SK-N-SH (cell line): ENCODE measurements at regions of chr7 and their contacts with region 1.

Region 1: DNA sequence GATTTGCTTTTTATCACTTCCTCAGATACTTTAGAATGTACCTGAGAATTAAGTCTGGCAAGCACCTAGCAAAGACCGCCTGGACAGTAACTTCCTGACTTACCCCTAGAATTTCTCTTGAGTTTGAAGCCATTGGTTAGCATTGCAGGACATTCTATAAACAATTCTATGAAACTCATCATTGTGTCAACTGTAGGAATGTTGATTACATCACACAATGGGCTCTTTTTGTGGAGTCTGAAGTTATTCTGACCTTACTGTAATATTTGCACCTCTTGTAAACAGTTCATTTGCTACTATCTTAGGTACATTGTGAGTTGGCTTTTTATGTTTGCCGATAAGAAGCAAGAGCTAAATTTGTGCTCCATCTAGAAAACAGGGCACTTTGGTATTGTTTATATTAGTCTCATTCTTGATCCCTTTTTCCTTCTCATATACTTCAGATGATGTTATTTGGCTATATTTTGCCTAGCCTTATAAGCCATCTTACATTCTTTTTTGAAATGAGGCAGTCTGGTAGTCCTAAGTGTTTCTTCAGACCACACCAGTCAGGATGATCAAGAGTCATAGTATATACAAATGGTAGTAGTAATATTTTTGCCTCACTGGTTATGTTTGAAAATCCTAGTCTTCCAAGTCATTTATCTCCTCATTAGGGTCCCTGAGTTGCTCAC is 52.4 kb downstream of the CASD1 start:
- DNase-seq: no peak
- H3K4me3 ChIP-seq: no peak overlapping the region
- H3K27ac ChIP-seq: no peak overlapping the region
- H3K4me1 ChIP-seq: no peaks in the 10 kb centered on the region; a peak in 1 of 4 replicates
- H3K27me3 ChIP-seq: no peaks in the 10 kb centered on the region
- CTCF ChIP-seq: no peak
- EP300 ChIP-seq: no peak
- RAD21 ChIP-seq: no peak

Region 2: GRCh38 chr7:94509879-94510581 is 51.9 kb before region 1 on chr7:
- CTCF ChIA-PET with region 1: no interaction called
- POLR2A ChIA-PET with region 1: no interaction called
- DNase-seq: peak; percentile 96
- H3K4me3 ChIP-seq: peak overlapping the region; percentile 92 to 93
- H3K27ac ChIP-seq: peak overlapping the region; percentile 72 to 98
- H3K4me1 ChIP-seq: peaks cover 15 to 41% of the 10 kb centered on the region in 2 experiments; a peak in 3 of 4 replicates
- H3K27me3 ChIP-seq: no peaks in the 10 kb centered on the region
- CTCF ChIP-seq: no peak
- EP300 ChIP-seq: peak in 1 of 2 experiments; percentile 22; a peak in 1 of 4 replicates
- RAD21 ChIP-seq: peak; percentile 3; the same call in 1 of the 2 replicates

Region 3: GRCh38 chr7:94529516-94529915 is 32.5 kb before region 1 on chr7:
- CTCF ChIA-PET with region 1: no interaction called
- POLR2A ChIA-PET with region 1: no interaction called
- DNase-seq: no peak
- H3K4me3 ChIP-seq: no peak overlapping the region
- H3K27ac ChIP-seq: no peak overlapping the region
- H3K4me1 ChIP-seq: no peaks in the 10 kb centered on the region; a peak in 1 of 4 replicates
- H3K27me3 ChIP-seq: no peaks in the 10 kb centered on the region
- CTCF ChIP-seq: no peak
- EP300 ChIP-seq: no peak
- RAD21 ChIP-seq: no peak

Region 4: GRCh38 chr7:94547126-94547525 is 14.9 kb before region 1 on chr7:
- CTCF ChIA-PET with region 1: interaction called, 10 read pairs
- POLR2A ChIA-PET with region 1: no interaction called
- DNase-seq: no peak
- H3K4me3 ChIP-seq: no peak overlapping the region
- H3K27ac ChIP-seq: no peak overlapping the region
- H3K4me1 ChIP-seq: no peaks in the 10 kb centered on the region; a peak in 1 of 4 replicates
- H3K27me3 ChIP-seq: no peaks in the 10 kb centered on the region
- CTCF ChIP-seq: no peak
- EP300 ChIP-seq: no peak
- RAD21 ChIP-seq: no peak

Region 5: GRCh38 chr7:94848531-94848930 is 286.6 kb after region 1 on chr7:
- CTCF ChIA-PET with region 1: no interaction called
- POLR2A ChIA-PET with region 1: no interaction called
- DNase-seq: no peak
- H3K4me3 ChIP-seq: no peak overlapping the region
- H3K27ac ChIP-seq: no peak overlapping the region
- H3K4me1 ChIP-seq: no peaks in the 10 kb centered on the region
- H3K27me3 ChIP-seq: no peaks in the 10 kb centered on the region
- CTCF ChIP-seq: no peak
- EP300 ChIP-seq: no peak
- RAD21 ChIP-seq: no peak